CD4-positive, alpha-beta T cell (primary cell): ENCODE measurements at regions of chr14 and their contacts with region 1.

Region 1: GRCh38 chr14:51901475-51902024 is 41.1 kb downstream of the GNG2 start:
- DNase-seq: peak in 10 of 14 experiments; percentile 5 to 65 (median 24)
- ATAC-seq: peak; percentile 79
- H3K4me3 ChIP-seq: no peak overlapping the region
- H3K4me3 Mint-ChIP-seq: no peak overlapping the region
- H3K27ac ChIP-seq: no peak overlapping the region
- H3K27ac Mint-ChIP-seq: peak overlapping the region; percentile 65
- H3K4me1 ChIP-seq: peaks cover 33% of the 10 kb centered on the region
- H3K4me1 Mint-ChIP-seq: peaks cover 81% of the 10 kb centered on the region
- H3K27me3 ChIP-seq: no peaks in the 10 kb centered on the region
- H3K27me3 Mint-ChIP-seq: no peaks in the 10 kb centered on the region
- CTCF ChIP-seq: no peak

Region 2: GRCh38 chr14:51657762-51658161 is 243.8 kb before region 1 on chr14:
- CTCF ChIA-PET with region 1: no interaction called
- POLR2A ChIA-PET with region 1: no interaction called
- intact Hi-C with region 1: no loop called
- DNase-seq: no peak
- ATAC-seq: no peak
- H3K4me3 ChIP-seq: no peak overlapping the region
- H3K4me3 Mint-ChIP-seq: no peak overlapping the region
- H3K27ac ChIP-seq: no peak overlapping the region
- H3K27ac Mint-ChIP-seq: no peak overlapping the region
- H3K4me1 ChIP-seq: peaks cover 4% of the 10 kb centered on the region
- H3K4me1 Mint-ChIP-seq: peaks cover 9% of the 10 kb centered on the region
- H3K27me3 ChIP-seq: peaks cover 9 to 31% of the 10 kb centered on the region in 2 experiments
- H3K27me3 Mint-ChIP-seq: peaks cover 45% of the 10 kb centered on the region
- CTCF ChIP-seq: no peak

Region 3: DNA sequence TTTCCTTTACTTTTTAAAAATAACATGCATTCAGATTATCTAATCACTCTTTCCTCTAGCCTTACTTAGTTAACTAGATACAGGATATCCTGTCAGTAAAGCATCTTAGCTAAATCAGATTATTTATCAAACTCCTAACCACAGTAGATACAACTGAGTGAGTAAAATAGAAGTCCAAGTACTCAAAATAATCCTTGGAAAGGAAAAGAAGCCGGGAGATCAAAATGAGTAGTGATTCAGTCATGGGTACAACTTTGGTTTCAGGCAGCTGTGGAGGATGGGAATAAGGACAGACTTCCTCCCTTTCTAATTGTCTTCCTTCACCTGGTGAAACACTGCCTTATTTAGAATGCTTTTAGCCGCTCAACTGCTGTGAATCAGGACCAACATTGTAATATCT is 11.7 kb before region 1 on chr14:
- CTCF ChIA-PET with region 1: interaction called, 5 read pairs
- POLR2A ChIA-PET with region 1: interaction called, 5 read pairs
- intact Hi-C with region 1: loop called in 1 of 2 experiments (anchors 1 kb)
- DNase-seq: peak in 1 of 14 experiments; percentile 53
- ATAC-seq: peak; percentile 79
- H3K4me3 ChIP-seq: no peak overlapping the region
- H3K4me3 Mint-ChIP-seq: peak overlapping the region; percentile 70
- H3K27ac ChIP-seq: peak overlapping the region in 1 of 2 donors; percentile 39
- H3K27ac Mint-ChIP-seq: peak overlapping the region; percentile 34
- H3K4me1 ChIP-seq: peaks cover 11% of the 10 kb centered on the region
- H3K4me1 Mint-ChIP-seq: peaks cover 89% of the 10 kb centered on the region
- H3K27me3 ChIP-seq: no peaks in the 10 kb centered on the region
- H3K27me3 Mint-ChIP-seq: no peaks in the 10 kb centered on the region
- CTCF ChIP-seq: no peak

Region 4: GRCh38 chr14:51963286-51963685 is 61.7 kb after region 1 on chr14:
- CTCF ChIA-PET with region 1: no interaction called
- POLR2A ChIA-PET with region 1: no interaction called
- intact Hi-C with region 1: no loop called
- DNase-seq: peak in 1 of 14 experiments; percentile 18
- ATAC-seq: peak; percentile 77
- H3K4me3 ChIP-seq: no peak overlapping the region
- H3K4me3 Mint-ChIP-seq: peak overlapping the region; percentile 80
- H3K27ac ChIP-seq: no peak overlapping the region
- H3K27ac Mint-ChIP-seq: peak overlapping the region; percentile 90
- H3K4me1 ChIP-seq: peaks cover 4% of the 10 kb centered on the region
- H3K4me1 Mint-ChIP-seq: peaks cover 60% of the 10 kb centered on the region
- H3K27me3 ChIP-seq: no peaks in the 10 kb centered on the region
- H3K27me3 Mint-ChIP-seq: no peaks in the 10 kb centered on the region
- CTCF ChIP-seq: no peak